BJ (cell line): ENCODE measurements at regions of chr5 and their contacts with region 1.

Region 1: GRCh38 chr5:132227485-132228240 is at the start of gene P4HA2:
- DNase-seq: no peak
- H3K4me3 ChIP-seq: peak within 1 kb of the TSS; percentile 61
- H3K27me3 ChIP-seq: peaks cover 1% of the 10 kb centered on the region; the same call in 1 of the 2 replicates
- CTCF ChIP-seq: peak; percentile 9; the same call in 1 of the 2 replicates
- polyA plus RNA-seq, gene P4HA2: 372 and 435 TPM in 2 replicates

Region 2: DNA sequence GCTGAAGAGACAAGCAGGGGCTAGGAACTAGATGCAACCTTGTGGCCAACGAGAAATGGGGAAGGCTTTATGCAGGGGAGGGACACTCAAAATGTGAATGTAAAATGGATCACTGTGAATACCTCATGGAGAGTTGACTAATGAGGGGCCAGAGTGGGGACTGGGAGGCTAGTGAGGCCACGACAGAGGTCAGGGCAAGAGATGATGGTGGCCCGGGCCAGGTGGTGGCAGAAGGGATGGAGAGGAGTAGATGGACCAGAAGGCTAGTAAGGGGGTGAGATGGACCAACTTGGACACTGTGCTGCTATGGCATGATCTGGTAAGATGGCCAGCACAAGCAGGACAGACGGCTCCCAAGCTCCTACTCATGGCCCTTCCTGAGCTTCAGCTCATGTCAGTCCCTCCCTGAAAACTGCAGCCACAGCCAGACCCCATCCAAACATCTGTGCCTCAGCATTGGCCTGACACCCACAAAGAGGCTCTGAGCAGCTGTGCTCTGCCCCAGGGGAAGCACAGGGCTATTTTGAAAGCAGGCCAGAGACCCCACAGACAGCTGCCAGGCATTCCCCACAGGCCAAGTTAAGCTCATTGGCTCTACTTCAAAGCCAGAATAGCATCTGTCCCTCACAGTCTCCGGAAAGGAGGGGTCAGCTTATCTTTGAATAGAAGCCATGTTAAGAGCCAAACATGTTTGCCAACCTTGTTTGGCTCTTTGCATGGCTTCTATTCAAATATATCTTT is 22.1 kb before region 1 on chr5:
- CTCF ChIA-PET with region 1: interaction called, 10 read pairs
- POLR2A ChIA-PET with region 1: no interaction called
- DNase-seq: no peak
- H3K4me3 ChIP-seq: no peak overlapping the region
- H3K27me3 ChIP-seq: no peaks in the 10 kb centered on the region
- CTCF ChIP-seq: no peak

Region 3: GRCh38 chr5:132469380-132470009 is 241.8 kb after region 1 on chr5:
- CTCF ChIA-PET with region 1: interaction called, 3 read pairs
- POLR2A ChIA-PET with region 1: interaction called, 11 read pairs
- DNase-seq: no peak
- H3K4me3 ChIP-seq: no peak overlapping the region
- H3K27me3 ChIP-seq: no peaks in the 10 kb centered on the region
- CTCF ChIP-seq: no peak